Activated T-helper 1 cell treated with anti-CD3 and anti-CD28 coated beads, Interleukin-12 subunit alpha, Interleukin-12 subunit beta, Interleukin-2, Interleukin-4 antibody, amounts not matched to agents 30 ng/mL and 10 ng/mL and 1 ng/mL, durations not matched to agents 14 hours and 24 hours and 36 hours (primary cell): ENCODE measurements at regions of chr1 and their contacts with region 1.

Region 1: GRCh38 chr1:181033799-181034451 is at the start of gene MR1:
- DNase-seq: peak; percentile 51
- H3K4me3 Mint-ChIP-seq: peak within 1 kb of the TSS; percentile 95
- H3K27ac Mint-ChIP-seq: peak within 1 kb of the TSS; percentile 96
- H3K4me1 Mint-ChIP-seq: peaks cover 63% of the 10 kb centered on the region
- H3K27me3 Mint-ChIP-seq: no peaks in the 10 kb centered on the region
- total RNA-seq, gene MR1: 16.6 and 17.6 TPM in 2 replicates

Region 2: DNA sequence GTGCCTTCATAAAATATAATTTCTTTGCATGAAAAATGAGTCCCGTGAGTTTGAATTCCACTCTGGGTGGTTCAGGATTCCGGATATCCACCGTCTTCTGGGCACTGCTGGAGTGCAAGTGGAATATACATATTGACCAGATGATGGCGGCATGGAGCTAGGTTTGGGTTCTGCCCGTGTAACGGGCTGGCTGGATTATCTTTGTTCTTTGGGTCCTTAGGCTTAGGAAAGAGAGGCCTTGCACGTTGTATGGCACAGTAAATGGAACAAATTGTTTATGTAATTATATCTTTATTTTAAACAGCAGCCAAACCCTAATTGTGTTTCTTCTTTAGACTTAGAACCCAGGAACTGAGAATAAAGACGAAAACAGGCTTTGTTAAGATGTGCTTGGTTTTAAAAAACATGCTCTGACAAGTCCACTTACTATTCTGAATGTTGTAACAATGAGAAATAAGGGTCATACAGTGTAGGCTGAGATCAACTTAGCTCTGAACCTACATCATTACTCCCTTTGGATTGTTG is 518.0 kb before region 1 on chr1:
- intact Hi-C with region 1: loop called (anchors 5 kb)
- DNase-seq: peak; percentile 41
- H3K4me3 Mint-ChIP-seq: no peak overlapping the region
- H3K27ac Mint-ChIP-seq: no peak overlapping the region
- H3K4me1 Mint-ChIP-seq: no peaks in the 10 kb centered on the region
- H3K27me3 Mint-ChIP-seq: peaks cover 9% of the 10 kb centered on the region

Region 3: GRCh38 chr1:181014477-181015250 is 19.3 kb before region 1 on chr1:
- intact Hi-C with region 1: loop called (anchors 1 kb)
- DNase-seq: no peak
- H3K4me3 Mint-ChIP-seq: no peak overlapping the region
- H3K27ac Mint-ChIP-seq: no peak overlapping the region
- H3K4me1 Mint-ChIP-seq: peaks cover 44% of the 10 kb centered on the region
- H3K27me3 Mint-ChIP-seq: no peaks in the 10 kb centered on the region

Region 4: GRCh38 chr1:181044449-181044966 is 10.6 kb after region 1 on chr1:
- intact Hi-C with region 1: loop called (anchors 1 kb)
- DNase-seq: peak; percentile 63
- H3K4me3 Mint-ChIP-seq: peak overlapping the region; percentile 79
- H3K27ac Mint-ChIP-seq: peak overlapping the region; percentile 96
- H3K4me1 Mint-ChIP-seq: peaks cover 49% of the 10 kb centered on the region
- H3K27me3 Mint-ChIP-seq: no peaks in the 10 kb centered on the region

Region 5: DNA sequence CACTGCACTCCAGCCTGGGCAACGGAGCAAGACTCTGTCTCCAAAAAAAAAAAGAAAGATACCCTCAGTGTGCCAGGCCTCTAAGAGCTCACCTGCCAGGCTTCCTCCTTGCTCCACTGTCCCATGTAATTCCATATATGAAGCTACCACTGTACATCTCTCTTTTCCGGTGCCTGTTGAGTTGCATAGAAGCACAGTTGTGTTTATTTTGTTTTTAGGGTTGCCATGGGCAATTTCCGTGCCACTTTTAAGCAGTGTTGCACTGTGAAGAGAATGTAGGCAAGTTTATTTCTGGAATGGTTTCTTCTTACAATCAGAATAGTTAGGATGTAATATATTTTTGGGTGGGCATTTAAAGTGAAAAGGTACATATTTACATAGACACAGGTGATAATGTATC is 23.2 kb after region 1 on chr1:
- intact Hi-C with region 1: no loop called
- DNase-seq: no peak
- H3K4me3 Mint-ChIP-seq: no peak overlapping the region
- H3K27ac Mint-ChIP-seq: no peak overlapping the region
- H3K4me1 Mint-ChIP-seq: peaks cover 11% of the 10 kb centered on the region
- H3K27me3 Mint-ChIP-seq: no peaks in the 10 kb centered on the region

Region 6: DNA sequence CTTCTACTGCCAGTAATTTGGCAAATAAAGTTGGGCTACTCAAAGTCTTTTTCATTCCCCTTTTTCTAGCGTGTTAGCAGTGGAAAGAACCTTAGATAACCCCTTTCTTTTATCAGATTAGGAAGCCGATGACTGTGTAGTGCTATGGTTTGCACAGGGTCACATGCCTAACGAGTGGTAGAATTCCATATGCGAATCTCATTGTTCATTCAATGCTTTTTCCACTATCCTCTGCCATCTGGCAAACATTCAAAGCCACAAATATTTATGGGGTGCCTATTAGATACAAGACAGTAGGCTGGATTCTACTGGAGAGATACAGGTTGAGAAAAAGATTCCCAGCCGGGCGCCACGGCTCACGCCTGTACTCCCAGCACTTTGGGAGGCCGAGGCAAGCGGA is 39.7 kb after region 1 on chr1:
- intact Hi-C with region 1: no loop called
- DNase-seq: no peak
- H3K4me3 Mint-ChIP-seq: no peak overlapping the region
- H3K27ac Mint-ChIP-seq: no peak overlapping the region
- H3K4me1 Mint-ChIP-seq: no peaks in the 10 kb centered on the region
- H3K27me3 Mint-ChIP-seq: peaks cover 39% of the 10 kb centered on the region